GM12878 (cell line): ENCODE measurements at regions of chr4 and their contacts with region 1.

Region 1: GRCh38 chr4:138522366-138522765 is 280.2 kb upstream of the SLC7A11 start:
- DNase-seq: no peak
- ATAC-seq: peak; percentile 85
- H3K4me3 ChIP-seq: no peak overlapping the region
- H3K27ac ChIP-seq: no peak overlapping the region
- H3K4me1 ChIP-seq: no peaks in the 10 kb centered on the region
- H3K27me3 ChIP-seq: no peaks in the 10 kb centered on the region
- CTCF ChIP-seq: peak; percentile 35 to 57 (median 52); a peak in 4 of 6 replicates
- EP300 ChIP-seq: no peak
- POLR2A ChIP-seq: no peak
- RAD21 ChIP-seq: peak; percentile 69

Region 2: GRCh38 chr4:137819964-137820383 is 702.4 kb before region 1 on chr4:
- CTCF ChIA-PET with region 1: interaction called, 12 read pairs
- POLR2A ChIA-PET with region 1: no interaction called
- RAD21 ChIA-PET with region 1: interaction called, 4 read pairs
- SMC1A ChIA-PET with region 1: no interaction called
- in situ Hi-C with region 1: no loop called
- intact Hi-C with region 1: no loop called
- DNase-seq: peak; percentile 1
- ATAC-seq: peak; percentile 97
- H3K4me3 ChIP-seq: no peak overlapping the region
- H3K27ac ChIP-seq: no peak overlapping the region
- H3K4me1 ChIP-seq: no peaks in the 10 kb centered on the region
- H3K27me3 ChIP-seq: no peaks in the 10 kb centered on the region
- CTCF ChIP-seq: peak; percentile 62 to 77 (median 66)
- EP300 ChIP-seq: no peak
- POLR2A ChIP-seq: no peak
- RAD21 ChIP-seq: peak; percentile 89

Region 3: GRCh38 chr4:138035781-138036258 is 486.5 kb before region 1 on chr4:
- CTCF ChIA-PET with region 1: interaction called, 19 read pairs
- POLR2A ChIA-PET with region 1: no interaction called
- RAD21 ChIA-PET with region 1: interaction called, 3 read pairs
- SMC1A ChIA-PET with region 1: interaction called, 4 read pairs
- in situ Hi-C with region 1: no loop called
- intact Hi-C with region 1: loop called (anchors 5 kb)
- DNase-seq: peak; percentile 69
- ATAC-seq: peak; percentile 100
- H3K4me3 ChIP-seq: no peak overlapping the region
- H3K27ac ChIP-seq: no peak overlapping the region
- H3K4me1 ChIP-seq: no peaks in the 10 kb centered on the region
- H3K27me3 ChIP-seq: no peaks in the 10 kb centered on the region
- CTCF ChIP-seq: peak; percentile 44 to 71 (median 64); a peak in 5 of 6 replicates
- EP300 ChIP-seq: 0 out of 4 replicates have a peak, but pooled peaks of 1 of the 2 experiments have one; percentile 43
- POLR2A ChIP-seq: no peak
- RAD21 ChIP-seq: peak; percentile 86